ENCODE measurements at regions of chr7 and their contacts with region 1.

Region 1: GRCh38 chr7:80517282-80517747 is 5.5 kb upstream of the GNAT3 start:
- H3K4me3 Mint-ChIP-seq: peak overlapping the region; percentile 4
- H3K27ac Mint-ChIP-seq: peak overlapping the region; percentile 52
- H3K4me1 Mint-ChIP-seq: peaks cover 14% of the 10 kb centered on the region
- H3K27me3 Mint-ChIP-seq: no peaks in the 10 kb centered on the region

Region 2: DNA sequence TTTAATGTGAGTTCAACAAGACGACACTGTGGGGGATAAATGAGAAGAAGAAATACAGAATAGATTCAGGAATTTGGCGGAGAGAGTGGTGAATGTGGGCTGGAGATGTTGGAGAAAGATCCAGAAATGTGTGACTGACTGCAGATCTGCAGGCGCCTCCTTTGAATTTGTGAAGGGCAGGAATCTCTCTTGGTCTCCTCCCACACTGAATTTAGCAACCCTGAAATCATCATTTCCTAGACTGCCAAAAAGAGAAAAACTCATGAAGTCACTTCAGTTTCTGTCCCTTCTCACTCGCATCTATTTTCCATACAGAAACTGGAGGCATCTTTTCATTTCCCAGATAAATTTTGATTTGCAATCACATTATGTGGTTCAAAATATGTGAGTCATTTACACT is 254.0 kb before region 1 on chr7:
- intact Hi-C with region 1: no loop called
- H3K4me3 Mint-ChIP-seq: no peak overlapping the region
- H3K27ac Mint-ChIP-seq: no peak overlapping the region
- H3K4me1 Mint-ChIP-seq: no peaks in the 10 kb centered on the region
- H3K27me3 Mint-ChIP-seq: no peaks in the 10 kb centered on the region

Region 3: DNA sequence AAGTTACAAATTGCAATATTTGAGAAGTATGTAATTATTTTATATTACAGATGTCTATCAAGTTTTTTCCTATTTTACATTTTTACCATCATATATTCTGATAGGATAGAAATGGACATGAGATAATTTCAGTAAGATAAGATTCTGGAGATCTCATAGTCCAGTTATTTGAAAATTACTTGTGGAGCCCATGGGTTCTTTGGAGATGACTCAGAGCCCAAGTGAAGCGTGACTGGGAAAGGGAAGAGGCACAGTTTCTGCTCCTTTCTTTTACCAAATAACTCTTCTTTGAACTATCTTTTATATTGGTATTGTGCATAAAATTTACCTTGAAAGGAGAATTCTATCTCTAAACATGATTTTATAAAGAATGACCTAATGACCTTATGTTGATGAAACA is 123.5 kb after region 1 on chr7:
- intact Hi-C with region 1: loop called (anchors 10 kb)
- H3K4me3 Mint-ChIP-seq: peak overlapping the region; percentile 39
- H3K27ac Mint-ChIP-seq: no peak overlapping the region
- H3K4me1 Mint-ChIP-seq: peaks cover 8% of the 10 kb centered on the region
- H3K27me3 Mint-ChIP-seq: no peaks in the 10 kb centered on the region

Measured in dendritic cell treated with granulocyte-macrophage colony-stimulating factor and Interleukin-4, amounts not matched to agents 40 ng/mL and 50 ng/mL, for 4 days (primary cell).